ENCODE measurements at regions of chr5 and their contacts with region 1.

Region 1: GRCh38 chr5:117454716-117455596 is 880.3 kb upstream of the SEMA6A start:
- H3K4me3 ChIP-seq: peak overlapping the region; percentile 21
- H3K27ac ChIP-seq: no peak overlapping the region
- H3K4me1 ChIP-seq: no peaks in the 10 kb centered on the region
- CTCF ChIP-seq: peak; percentile 75; the same call in 1 of the 2 replicates

Region 2: DNA sequence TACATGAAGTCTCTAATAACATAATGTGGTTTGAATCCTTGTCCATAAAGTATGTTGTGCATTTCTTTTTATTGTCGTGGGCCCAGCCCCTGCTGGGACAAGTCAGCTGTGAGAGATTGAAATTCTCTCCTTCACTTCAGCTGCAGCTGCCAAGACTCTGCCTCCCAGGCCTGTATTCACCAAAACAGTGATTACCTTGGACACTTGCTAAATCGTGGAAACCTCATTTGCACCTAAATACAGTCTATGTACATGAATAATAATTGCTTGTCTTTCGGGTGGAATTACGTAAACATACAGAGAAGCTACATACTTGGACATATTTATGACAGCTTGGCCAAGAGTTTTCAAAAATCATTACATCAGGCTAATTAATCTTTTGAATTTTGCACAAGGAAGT is 18.2 kb after region 1 on chr5:
- CTCF ChIA-PET with region 1: interaction called, 12 read pairs
- POLR2A ChIA-PET with region 1: no interaction called
- H3K4me3 ChIP-seq: no peak overlapping the region
- H3K27ac ChIP-seq: no peak overlapping the region
- H3K4me1 ChIP-seq: no peaks in the 10 kb centered on the region
- CTCF ChIP-seq: no peak

Region 3: DNA sequence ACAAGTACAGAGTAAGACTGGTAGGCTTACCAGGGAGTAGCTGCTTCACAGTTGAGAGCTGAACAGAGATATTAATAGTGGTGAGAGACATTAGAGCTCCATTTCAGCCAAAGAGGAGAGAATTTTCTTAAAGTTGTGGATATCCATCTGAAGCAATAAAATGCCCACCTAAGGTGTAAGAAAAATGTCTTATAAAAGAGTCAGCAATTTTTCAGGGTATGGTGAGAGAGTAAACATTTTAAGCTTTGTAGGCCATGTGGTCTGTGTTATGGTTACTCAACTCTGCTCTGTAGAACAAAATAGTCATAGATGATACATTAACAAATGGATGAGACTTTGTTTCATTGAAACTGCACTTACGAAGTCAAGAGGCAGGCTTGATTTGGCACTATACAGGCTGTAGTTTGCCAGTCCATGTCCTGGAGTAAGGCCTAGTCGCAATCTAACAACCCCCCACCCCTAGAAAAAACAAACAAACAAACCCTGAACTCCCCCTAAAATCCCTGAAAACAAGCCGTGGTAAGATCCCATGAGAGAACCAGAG is 65.1 kb after region 1 on chr5:
- CTCF ChIA-PET with region 1: interaction called, 10 read pairs
- POLR2A ChIA-PET with region 1: no interaction called
- H3K4me3 ChIP-seq: no peak overlapping the region
- H3K27ac ChIP-seq: no peak overlapping the region
- H3K4me1 ChIP-seq: no peaks in the 10 kb centered on the region
- CTCF ChIP-seq: no peak